ENCODE measurements at regions of chr3 and their contacts with region 1.

Region 1: DNA sequence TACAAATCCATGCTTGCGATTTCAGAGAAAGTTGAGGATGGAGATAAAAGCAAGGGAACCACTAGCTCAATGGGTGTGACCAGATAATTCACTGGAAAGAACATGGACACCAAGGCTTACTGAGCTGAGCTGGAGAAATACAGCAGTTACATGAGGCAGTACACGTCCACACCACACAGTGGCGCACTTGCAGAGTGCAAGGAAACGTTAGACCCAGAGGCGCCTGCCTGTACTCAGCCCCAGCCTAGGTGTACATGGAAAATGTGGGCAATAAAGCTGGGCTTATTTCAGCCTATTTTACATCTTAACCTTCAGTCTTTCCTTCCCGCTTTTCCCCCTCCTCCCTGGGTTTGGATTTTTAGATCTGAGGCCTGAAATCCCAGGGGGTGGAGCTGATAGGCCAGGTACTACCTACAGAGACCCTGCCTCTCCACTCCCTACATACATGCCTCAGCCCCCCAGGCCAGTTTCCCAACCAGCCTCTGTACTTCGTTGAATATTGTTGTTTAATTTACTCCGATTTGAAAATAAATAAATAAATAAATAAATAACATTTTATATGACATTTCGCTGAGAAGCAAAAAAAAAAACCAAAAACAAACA is 60.1 kb downstream of the PCOLCE2 start:
- DNase-seq: peak; percentile 64
- H3K4me3 ChIP-seq: no peak overlapping the region
- H3K27ac ChIP-seq: no peak overlapping the region
- H3K4me1 ChIP-seq: no peaks in the 10 kb centered on the region
- H3K27me3 ChIP-seq: no peaks in the 10 kb centered on the region
- CTCF ChIP-seq: peak; percentile 96 to 97

Region 2: DNA sequence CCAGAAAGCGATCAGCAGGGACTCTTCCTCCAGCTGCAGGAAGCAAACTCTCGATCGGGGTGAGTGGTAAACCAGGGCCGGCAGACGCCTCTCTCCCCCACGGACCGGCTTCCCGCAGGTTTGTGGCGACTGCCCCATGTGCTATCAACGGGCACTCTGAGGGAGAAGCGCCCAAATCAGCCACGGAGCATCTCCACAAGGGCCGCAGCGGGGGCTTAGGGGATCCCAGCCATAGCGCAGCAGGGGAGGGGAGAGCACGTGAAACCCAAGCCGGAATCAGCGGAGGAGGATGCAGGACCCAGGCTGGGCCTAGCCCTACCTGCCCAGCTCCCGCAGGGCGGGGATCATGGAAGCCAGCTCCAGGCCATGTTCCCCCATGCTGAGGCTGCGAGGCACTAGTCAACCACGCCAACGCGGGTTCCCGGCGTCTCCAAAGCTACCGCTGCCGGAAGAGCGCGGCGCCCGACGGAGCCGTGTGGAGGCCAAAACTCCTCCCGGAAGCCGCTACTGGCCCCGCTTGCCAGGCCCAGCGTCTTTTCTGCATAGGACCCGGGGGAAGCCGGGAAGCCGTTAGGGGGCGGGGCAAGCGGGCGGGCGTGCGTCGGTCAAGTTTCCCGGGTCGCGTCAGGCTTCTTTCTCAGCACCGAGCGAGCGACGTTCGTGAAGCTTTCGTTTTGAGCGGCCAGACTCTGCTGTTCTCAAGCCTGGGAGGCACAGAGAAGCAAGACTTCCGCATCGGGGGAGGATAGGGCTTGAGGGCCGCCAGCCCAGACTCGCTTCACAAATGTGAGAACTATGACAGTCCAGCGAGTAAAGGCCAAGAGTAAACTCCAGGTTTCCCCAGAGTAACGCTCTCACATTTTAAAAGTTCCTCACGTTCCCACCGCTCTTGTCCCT is 250.2 kb before region 1 on chr3 and contains the start of gene ATR:
- CTCF ChIA-PET with region 1: no interaction called
- dilution Hi-C with region 1: loop called (anchors 25 kb)
- in situ Hi-C with region 1: loop called (anchors 10 to 25 kb)
- intact Hi-C with region 1: no loop called
- DNase-seq: peak; percentile 98
- H3K4me3 ChIP-seq: peak within 1 kb of the TSS; percentile 82 to 100 (median 97)
- H3K27ac ChIP-seq: peak within 1 kb of the TSS; percentile 91
- H3K4me1 ChIP-seq: peaks cover 13% of the 10 kb centered on the region
- H3K27me3 ChIP-seq: no peaks in the 10 kb centered on the region
- CTCF ChIP-seq: no peak
- total RNA-seq, gene ATR: 31.1 to 43.2 TPM

Region 3: GRCh38 chr3:142808103-142808917 is 20.5 kb before region 1 on chr3:
- CTCF ChIA-PET with region 1: interaction called, 15 read pairs
- dilution Hi-C with region 1: no loop called
- in situ Hi-C with region 1: no loop called
- intact Hi-C with region 1: no loop called
- DNase-seq: peak; percentile 89
- H3K4me3 ChIP-seq: no peak overlapping the region
- H3K27ac ChIP-seq: peak overlapping the region; percentile 57
- H3K4me1 ChIP-seq: peaks cover 8% of the 10 kb centered on the region
- H3K27me3 ChIP-seq: no peaks in the 10 kb centered on the region
- CTCF ChIP-seq: no peak

Region 4: GRCh38 chr3:142929109-142929508 is 100.3 kb after region 1 on chr3:
- CTCF ChIA-PET with region 1: no interaction called
- dilution Hi-C with region 1: no loop called
- in situ Hi-C with region 1: no loop called
- intact Hi-C with region 1: loop called (anchors 2 kb)
- DNase-seq: peak; percentile 58
- H3K4me3 ChIP-seq: no peak overlapping the region
- H3K27ac ChIP-seq: no peak overlapping the region
- H3K4me1 ChIP-seq: peaks cover 13% of the 10 kb centered on the region
- H3K27me3 ChIP-seq: no peaks in the 10 kb centered on the region
- CTCF ChIP-seq: peak; percentile 70 to 80

Region 5: DNA sequence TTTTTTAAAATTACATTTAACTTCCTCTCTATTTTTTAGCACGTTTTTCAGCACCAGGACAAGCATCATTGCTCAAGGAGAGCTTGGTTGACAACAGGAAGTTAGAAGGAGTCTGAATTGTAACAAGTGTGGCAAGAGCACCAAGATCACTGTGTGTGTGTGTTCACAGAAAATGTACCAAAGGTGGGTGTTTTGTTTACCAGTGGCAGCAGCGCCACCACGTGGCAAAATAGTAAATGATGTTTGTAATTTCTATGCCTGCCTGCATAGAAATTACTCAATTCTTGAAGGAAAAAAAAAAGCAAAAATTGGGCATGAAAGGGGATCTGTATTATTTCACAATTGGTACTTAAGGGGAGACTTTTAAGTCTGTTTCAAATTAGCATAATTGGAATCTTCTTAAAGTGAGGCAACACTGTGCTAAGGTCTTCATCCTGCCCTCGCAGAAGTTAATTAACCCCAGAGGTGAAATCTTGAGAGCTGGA is 165.2 kb after region 1 on chr3:
- CTCF ChIA-PET with region 1: no interaction called
- dilution Hi-C with region 1: loop called (anchors 25 kb)
- in situ Hi-C with region 1: loop called (anchors 5 kb)
- intact Hi-C with region 1: loop called (anchors 1 kb)
- DNase-seq: peak; percentile 44
- H3K4me3 ChIP-seq: no peak overlapping the region
- H3K27ac ChIP-seq: no peak overlapping the region
- H3K4me1 ChIP-seq: no peaks in the 10 kb centered on the region
- H3K27me3 ChIP-seq: no peaks in the 10 kb centered on the region
- CTCF ChIP-seq: peak; percentile 66

Measured in mammary epithelial cell (primary cell).